HEK293 (cell line): ENCODE measurements at regions of chr18 and their contacts with region 1.

Region 1: DNA sequence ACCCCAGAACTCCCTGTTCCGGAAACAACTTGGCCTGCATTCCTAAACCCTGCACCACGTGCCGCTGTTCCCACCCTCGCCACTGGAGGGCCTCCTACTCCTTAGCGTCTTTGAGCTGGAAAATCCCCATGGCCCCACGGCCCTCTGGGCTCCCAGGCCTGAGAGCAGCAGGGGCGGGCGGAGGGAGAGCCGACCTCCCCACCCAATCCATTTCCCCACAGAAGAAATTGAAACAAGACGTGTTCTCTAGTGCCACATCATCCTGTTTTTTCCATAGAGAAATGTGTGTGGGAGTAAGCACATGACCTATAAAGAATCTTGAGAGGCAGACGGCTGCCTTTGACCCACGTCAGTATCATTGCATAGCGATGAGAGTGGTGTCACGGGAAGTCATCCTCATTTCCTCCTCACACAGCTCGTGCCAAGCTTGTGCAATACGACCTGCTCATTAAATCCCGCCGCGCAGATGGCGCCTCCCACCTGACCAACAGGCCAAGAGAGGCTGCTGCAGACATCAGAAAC is 79.2 kb downstream of the LAMA1 start:
- H3K4me3 ChIP-seq: peak overlapping the region; percentile 2; the same call in 1 of the 2 replicates
- H3K27ac ChIP-seq: peak overlapping the region; percentile 28; the same call in 1 of the 2 replicates
- H3K4me1 ChIP-seq: no peaks in the 10 kb centered on the region; the same call in 1 of the 2 replicates
- CTCF ChIP-seq: peak; percentile 60; the same call in 1 of the 2 replicates

Region 2: GRCh38 chr18:6389005-6389404 is 649.4 kb before region 1 on chr18:
- CTCF ChIA-PET with region 1: no interaction called
- POLR2A ChIA-PET with region 1: no interaction called
- H3K4me3 ChIP-seq: no peak overlapping the region
- H3K27ac ChIP-seq: no peak overlapping the region
- H3K4me1 ChIP-seq: no peaks in the 10 kb centered on the region
- CTCF ChIP-seq: no peak

Region 3: DNA sequence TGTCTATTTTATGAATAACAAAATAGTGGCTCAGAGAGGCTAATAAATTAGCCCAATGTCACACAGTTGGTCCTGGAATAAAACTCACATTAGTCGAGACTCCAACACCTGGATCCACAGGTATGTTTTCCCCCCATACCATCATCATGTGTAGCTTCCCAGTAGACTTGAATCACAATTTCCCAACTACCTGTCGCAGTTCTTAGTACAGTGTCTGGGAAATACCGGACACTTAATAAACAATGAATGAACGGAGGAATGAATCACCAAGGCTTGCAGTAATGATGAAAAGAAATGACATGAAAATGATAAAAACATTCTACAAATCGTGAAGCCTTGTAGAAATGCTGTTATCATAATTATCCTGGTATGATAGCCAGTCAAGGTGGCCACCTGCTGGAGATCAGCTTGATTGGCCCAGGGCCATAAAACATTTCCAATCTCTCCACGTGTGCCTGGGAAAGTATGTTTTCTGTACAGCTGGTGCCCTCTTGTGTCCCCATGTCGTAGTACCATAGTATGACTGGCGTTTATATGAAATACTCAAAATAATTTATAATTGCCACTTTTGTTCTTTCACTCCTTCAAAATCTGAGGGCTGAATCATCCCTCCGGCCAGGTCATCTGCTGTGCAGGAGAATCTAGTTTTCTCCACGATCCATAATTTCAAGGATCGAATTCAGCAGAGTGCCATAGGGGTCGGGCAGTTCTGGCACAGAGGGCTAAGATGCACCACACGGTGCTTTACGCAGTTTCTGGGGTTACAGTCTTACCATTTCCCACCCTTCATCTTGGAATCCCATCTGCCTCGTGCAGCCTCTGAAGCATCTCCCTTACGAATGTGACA is 16.2 kb before region 1 on chr18:
- CTCF ChIA-PET with region 1: interaction called, 31 read pairs
- POLR2A ChIA-PET with region 1: no interaction called
- H3K4me3 ChIP-seq: no peak overlapping the region
- H3K27ac ChIP-seq: no peak overlapping the region
- H3K4me1 ChIP-seq: no peaks in the 10 kb centered on the region
- CTCF ChIP-seq: peak; percentile 82

Region 4: DNA sequence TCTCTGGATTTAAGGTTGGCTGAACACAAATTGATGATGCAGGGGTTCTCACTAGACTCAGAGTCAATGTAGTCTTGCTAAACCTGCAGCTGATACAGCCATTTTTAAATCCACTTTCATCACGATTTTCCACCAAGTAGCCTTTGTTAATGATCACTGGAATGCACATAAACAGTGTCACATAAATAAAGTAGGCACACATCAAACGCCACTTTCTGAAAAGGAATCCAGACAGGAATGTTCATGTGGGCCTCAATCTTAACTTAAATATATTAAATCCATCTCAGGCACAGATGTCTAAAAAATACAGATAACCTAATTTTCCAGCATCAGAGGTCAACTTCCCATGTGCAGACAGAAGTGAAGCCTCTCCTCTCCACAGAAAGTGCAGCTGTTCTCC is 20.9 kb after region 1 on chr18:
- CTCF ChIA-PET with region 1: interaction called, 11 read pairs
- POLR2A ChIA-PET with region 1: no interaction called
- H3K4me3 ChIP-seq: no peak overlapping the region
- H3K27ac ChIP-seq: no peak overlapping the region
- H3K4me1 ChIP-seq: no peaks in the 10 kb centered on the region
- CTCF ChIP-seq: no peak

Region 5: DNA sequence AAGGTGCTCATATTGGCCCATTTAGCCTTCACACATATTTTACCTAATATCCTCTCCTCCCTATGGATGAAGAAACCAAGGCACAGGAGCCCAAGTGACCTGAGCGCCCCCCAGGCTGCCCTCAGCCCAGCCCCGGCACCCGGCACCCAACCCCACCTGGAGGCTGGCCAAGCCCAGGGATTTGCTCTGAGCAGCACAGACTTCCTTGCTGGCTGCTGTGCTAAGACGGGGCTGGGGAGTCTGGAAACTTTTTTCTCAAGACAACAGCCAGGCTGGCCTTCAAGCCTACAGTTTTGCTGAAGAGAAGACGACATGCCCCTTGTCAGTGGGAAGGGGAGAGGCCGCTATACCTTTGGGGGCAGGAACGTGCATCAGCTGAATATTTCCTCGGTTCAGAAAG is 131.9 kb after region 1 on chr18:
- CTCF ChIA-PET with region 1: interaction called, 164 read pairs
- POLR2A ChIA-PET with region 1: no interaction called
- H3K4me3 ChIP-seq: no peak overlapping the region
- H3K27ac ChIP-seq: no peak overlapping the region
- H3K4me1 ChIP-seq: no peaks in the 10 kb centered on the region
- CTCF ChIP-seq: no peak